HEK293 (cell line): ENCODE measurements at regions of chr1 and their contacts with region 1.

Region 1: DNA sequence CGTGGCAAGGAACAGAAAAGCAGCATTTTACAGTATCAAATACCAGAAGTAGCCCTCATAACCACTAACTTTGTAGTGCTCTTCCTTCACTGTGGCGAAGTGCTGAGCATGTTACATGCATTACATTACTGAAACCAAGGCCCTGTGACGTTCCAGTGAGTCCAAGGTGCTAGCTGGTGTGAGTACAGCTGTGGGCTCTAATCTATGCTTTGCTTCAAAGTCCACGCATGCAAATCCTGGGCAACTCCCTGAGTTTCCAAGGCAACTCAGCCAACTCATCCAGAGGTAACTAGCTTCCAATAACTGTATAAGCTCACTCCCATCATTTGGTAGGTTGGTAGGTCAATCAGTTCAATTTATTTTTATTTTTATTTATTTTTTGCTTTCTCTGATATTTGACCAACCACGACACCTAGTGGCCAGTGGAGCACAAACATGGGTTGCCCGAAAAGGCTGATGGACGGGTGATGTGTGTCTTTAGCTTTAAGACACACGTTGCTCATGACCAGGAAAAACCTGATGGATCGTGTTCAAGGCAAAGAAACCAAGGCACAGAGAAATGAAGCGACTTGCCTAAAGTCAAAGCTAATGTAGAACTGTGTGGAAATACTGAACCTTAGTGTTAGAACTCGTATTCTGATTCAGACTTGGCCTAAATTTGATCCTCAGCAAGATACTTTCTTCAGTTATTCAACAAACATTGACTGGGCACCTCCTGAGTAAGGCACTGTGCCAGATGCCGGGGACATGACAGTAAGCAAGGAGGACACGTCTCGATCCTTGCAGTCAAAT is 73.0 kb downstream of the GNG12 start:
- H3K4me3 ChIP-seq: no peak overlapping the region
- H3K27ac ChIP-seq: no peak overlapping the region
- H3K4me1 ChIP-seq: no peaks in the 10 kb centered on the region
- CTCF ChIP-seq: peak; percentile 45

Region 2: DNA sequence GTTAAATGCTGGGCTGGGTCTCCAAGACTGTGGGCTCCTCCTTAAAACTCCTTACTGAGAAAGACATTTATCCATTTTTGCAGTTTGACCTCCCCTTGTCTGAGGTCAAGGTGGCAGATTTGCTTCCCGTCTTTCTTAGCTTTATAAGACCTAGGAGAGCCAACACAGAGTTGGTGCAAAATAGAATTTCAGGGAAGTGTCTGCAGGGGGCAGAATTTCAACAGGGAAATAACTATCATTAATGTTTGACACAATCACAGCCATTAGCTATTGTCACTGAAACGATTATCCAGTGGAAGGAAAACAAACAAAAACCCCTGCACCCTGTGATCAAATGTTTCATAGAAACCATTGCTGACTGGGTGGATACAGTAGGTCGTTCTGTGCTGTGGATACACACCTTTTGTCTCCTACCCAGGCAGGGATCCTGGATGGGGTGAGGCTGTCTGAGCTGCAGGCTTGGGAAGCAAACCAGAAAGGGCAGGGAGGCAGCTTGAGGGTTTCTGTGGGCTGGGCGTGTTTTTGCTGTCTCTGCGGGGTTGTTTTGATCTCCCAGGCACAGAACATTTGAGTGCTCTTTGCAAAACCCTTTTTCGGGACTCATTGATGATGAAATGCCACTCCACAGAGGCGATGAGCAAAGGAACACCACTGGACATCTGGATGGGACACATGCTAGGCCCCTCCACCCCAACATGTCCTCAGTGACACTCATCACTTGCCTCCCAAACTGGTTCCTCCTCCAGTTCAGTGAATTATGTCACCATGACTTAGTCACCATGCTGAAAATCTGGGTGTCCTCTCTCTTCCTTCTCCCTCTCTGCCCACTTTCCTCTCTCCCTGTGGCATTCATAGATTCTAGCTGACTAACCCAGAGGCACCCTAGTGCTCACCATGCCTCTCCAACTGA is 235.8 kb before region 1 on chr1:
- CTCF ChIA-PET with region 1: interaction called, 26 read pairs
- POLR2A ChIA-PET with region 1: no interaction called
- H3K4me3 ChIP-seq: no peak overlapping the region
- H3K27ac ChIP-seq: no peak overlapping the region
- H3K4me1 ChIP-seq: no peaks in the 10 kb centered on the region
- CTCF ChIP-seq: no peak

Region 3: GRCh38 chr1:67552336-67552759 is 207.9 kb before region 1 on chr1:
- CTCF ChIA-PET with region 1: interaction called, 95 read pairs
- POLR2A ChIA-PET with region 1: no interaction called
- H3K4me3 ChIP-seq: no peak overlapping the region
- H3K27ac ChIP-seq: no peak overlapping the region
- H3K4me1 ChIP-seq: no peaks in the 10 kb centered on the region
- CTCF ChIP-seq: peak; percentile 44; the same call in 1 of the 2 replicates

Region 4: GRCh38 chr1:67570473-67571143 is 189.6 kb before region 1 on chr1:
- CTCF ChIA-PET with region 1: interaction called, 15 read pairs
- POLR2A ChIA-PET with region 1: no interaction called
- H3K4me3 ChIP-seq: no peak overlapping the region
- H3K27ac ChIP-seq: no peak overlapping the region
- H3K4me1 ChIP-seq: no peaks in the 10 kb centered on the region
- CTCF ChIP-seq: no peak

Region 5: GRCh38 chr1:67685067-67685557 is 75.1 kb before region 1 on chr1 and contains the start of gene GADD45A:
- CTCF ChIA-PET with region 1: interaction called, 18 read pairs
- POLR2A ChIA-PET with region 1: interaction called, 40 read pairs
- H3K4me3 ChIP-seq: peak within 1 kb of the TSS; percentile 92
- H3K27ac ChIP-seq: peak within 1 kb of the TSS; percentile 96
- H3K4me1 ChIP-seq: peaks cover 8% of the 10 kb centered on the region; the same call in 1 of the 2 replicates
- CTCF ChIP-seq: peak; percentile 50

Region 6: DNA sequence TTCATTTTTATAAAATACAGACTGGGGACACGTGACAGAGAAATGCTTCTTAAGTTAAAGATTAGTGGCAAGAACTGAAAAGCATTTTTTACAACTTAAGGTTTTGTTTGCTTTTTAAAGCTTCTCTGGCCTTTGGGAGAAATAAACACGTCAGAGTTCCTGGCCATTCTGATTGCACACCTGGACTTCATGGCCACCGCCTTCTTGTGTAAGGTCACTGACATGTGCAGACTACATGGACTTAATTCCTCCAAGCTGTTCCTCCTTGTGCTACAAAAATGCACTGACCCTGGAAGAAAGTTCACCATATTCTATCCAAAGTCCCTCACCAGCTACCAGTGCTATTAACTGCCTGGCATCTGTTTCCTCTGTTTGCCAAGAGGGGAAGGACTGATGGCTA is 19.1 kb before region 1 on chr1:
- CTCF ChIA-PET with region 1: interaction called, 13 read pairs
- POLR2A ChIA-PET with region 1: no interaction called
- H3K4me3 ChIP-seq: no peak overlapping the region
- H3K27ac ChIP-seq: no peak overlapping the region
- H3K4me1 ChIP-seq: peaks cover 4% of the 10 kb centered on the region; the same call in 1 of the 2 replicates
- CTCF ChIP-seq: no peak